Right ventricle myocardium superior (tissue), 1 donor: ENCODE measurements at regions of chr4 and their contacts with region 1.

Region 1: GRCh38 chr4:152735396-152735859 is 44.1 kb downstream of the TIGD4 start:
- DNase-seq: no peak
- ATAC-seq: peak; percentile 56

Region 2: GRCh38 chr4:152166567-152166966 is 568.9 kb before region 1 on chr4:
- intact Hi-C with region 1: no loop called
- DNase-seq: no peak
- ATAC-seq: peak; percentile 29

Region 3: GRCh38 chr4:152559641-152560040 is 175.8 kb before region 1 on chr4:
- intact Hi-C with region 1: no loop called
- DNase-seq: no peak
- ATAC-seq: no peak

Region 4: GRCh38 chr4:152640058-152640833 is 95.2 kb before region 1 on chr4:
- intact Hi-C with region 1: loop called (anchors 10 kb)
- DNase-seq: no peak
- ATAC-seq: peak; percentile 52

Region 5: GRCh38 chr4:152690706-152691651 is 44.4 kb before region 1 on chr4:
- intact Hi-C with region 1: no loop called
- DNase-seq: no peak
- ATAC-seq: peak; percentile 85

Region 6: GRCh38 chr4:153013202-153013977 is 278.0 kb after region 1 on chr4:
- intact Hi-C with region 1: no loop called
- DNase-seq: no peak
- ATAC-seq: no peak